ENCODE measurements at regions of chr11 and their contacts with region 1.

Region 1: DNA sequence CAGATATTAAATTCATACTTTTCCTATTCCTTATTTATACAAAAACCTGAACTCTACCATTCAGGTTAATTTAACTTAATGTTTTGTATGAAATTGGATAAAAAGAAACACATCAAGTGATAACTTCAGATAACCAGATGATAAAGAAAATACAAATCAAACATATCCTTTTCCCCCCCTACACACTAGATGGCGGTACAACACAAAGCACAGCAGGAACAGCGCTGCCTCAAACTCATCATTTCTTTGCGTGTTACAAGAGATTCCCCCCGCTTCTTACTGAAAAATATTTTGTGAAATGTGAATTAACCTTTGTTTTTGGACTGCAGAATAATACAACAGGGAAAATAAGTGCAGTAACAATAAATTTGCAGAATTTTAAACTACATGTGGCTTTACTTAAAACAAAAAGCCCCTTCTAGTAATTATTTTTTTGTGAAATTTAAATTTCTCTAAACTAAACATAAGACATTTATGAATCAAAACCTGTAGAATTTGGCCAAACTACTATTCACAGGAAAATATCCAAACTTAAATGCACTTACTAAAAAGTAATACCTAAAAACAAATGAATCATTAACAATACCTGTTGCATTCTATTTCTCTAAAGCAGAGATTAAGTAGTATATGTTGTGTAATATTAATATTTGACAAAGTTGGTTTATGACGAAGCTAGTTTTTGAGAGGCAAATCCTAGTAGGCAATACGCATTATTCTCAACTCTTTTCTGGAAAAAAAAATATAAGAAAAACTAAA is 74.4 kb downstream of the ARHGAP32 start:
- DNase-seq: peak; percentile 75

Region 2: DNA sequence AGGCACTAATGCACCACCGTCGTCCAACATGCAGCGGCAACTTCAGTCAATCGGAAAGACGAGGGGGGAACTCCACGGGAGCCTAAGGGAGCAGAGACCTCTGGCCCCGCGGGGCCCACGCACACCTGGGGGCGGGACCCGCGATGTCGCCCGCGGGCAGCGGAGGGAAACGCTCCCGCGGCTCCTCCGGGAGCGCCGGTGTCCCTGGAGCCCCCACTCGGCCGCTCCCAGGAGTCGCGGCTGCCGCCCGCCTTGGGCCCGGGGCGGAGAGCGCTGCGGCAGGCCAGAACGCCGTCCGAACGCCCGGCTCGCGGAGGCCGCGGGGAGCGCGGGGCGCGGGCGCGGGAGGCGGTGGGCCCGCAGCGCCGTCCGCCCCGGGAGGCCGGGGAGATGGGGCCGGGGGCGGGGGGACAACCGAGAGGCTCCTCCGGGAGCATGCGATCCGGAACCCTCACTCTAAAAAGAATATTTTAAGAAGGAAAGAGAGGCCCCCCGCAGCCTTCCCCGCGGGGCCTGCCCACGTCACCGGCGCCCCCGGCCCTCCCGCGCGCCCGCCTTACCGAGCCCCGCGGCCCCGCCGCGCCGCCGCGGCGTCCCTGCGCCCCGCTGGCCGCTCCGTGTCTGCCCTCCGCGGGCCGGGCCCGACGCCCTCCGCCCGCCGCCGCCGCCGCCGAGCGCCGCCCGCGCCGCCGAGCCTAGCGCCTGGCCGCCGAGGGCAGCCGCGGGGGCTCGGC is 161.0 kb after region 1 on chr11:
- in situ Hi-C with region 1: no loop called
- DNase-seq: no peak

Region 3: DNA sequence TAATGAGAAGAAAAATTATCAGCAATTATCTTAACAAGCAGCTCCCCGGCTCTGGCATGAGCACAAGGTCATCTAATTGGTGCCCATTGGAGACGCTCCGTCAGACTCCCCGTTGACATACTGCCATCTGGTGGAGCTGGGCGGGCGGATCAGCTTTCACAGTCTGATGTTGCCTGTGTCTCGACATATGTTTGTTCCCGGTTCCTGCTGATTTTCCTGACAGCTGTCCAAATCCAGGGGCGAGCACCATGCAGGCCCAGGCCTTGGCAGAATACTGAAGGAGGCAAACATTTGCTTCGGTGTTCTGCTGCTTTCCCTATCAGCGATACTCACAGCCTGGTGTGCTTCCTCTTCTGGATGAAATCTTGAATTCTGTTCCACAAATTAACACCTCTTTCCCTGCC is 214.1 kb after region 1 on chr11:
- in situ Hi-C with region 1: loop called (anchors 25 kb)
- DNase-seq: peak; percentile 73